Thyroid gland (tissue), 4 donors: ENCODE measurements at regions of chr9 and their contacts with region 1.

Region 1: DNA sequence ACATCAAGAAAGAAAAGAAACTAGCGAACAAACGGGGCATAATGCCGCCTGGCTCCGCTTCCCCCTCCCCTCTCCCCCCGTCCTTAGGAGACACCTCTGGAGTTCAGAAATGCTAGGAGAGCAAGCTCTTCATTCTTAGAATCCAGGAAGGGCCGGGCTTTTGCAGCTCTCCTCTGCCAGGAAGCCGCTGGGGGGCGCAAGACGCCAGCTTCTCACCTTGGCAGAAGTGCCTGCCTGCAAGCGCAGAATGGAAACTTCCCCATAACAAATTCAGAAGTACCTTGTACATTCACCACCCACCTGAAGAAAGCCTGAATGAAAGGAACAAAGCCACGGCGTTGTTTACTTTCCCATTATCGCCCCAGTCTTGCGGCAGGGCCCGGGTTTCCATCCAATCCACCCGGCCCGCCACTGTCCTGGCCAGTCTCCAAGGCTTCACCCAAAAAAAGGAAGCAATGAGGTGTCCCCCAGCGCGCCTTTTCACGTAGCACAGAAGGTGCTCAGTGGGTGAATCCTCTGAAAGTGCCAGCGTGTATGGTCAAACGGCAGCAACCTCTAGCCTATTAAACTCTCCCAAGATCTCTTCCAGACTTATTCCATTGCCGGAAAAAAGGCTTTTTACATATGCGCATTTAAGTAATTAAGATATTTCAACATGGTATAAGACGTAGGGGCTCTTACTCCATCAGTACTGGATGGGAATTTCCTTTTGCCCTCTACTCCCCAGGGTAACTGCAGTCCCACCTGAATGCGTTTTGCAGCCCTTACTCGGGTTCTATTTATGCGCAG is 1.6 kb upstream of the GADD45G start:
- DNase-seq: peak; percentile 93 to 96
- H3K4me3 ChIP-seq: peak overlapping the region in 1 of 3 donors; percentile 65
- H3K27ac ChIP-seq: peak overlapping the region in 2 of 3 donors; percentile 53 to 97
- H3K4me1 ChIP-seq: peaks cover 23 to 30% of the 10 kb centered on the region in 2 donors
- H3K27me3 ChIP-seq: no peaks in the 10 kb centered on the region
- CTCF ChIP-seq: peak; percentile 44 to 95 (median 85)
- POLR2A ChIP-seq: no peak

Region 2: DNA sequence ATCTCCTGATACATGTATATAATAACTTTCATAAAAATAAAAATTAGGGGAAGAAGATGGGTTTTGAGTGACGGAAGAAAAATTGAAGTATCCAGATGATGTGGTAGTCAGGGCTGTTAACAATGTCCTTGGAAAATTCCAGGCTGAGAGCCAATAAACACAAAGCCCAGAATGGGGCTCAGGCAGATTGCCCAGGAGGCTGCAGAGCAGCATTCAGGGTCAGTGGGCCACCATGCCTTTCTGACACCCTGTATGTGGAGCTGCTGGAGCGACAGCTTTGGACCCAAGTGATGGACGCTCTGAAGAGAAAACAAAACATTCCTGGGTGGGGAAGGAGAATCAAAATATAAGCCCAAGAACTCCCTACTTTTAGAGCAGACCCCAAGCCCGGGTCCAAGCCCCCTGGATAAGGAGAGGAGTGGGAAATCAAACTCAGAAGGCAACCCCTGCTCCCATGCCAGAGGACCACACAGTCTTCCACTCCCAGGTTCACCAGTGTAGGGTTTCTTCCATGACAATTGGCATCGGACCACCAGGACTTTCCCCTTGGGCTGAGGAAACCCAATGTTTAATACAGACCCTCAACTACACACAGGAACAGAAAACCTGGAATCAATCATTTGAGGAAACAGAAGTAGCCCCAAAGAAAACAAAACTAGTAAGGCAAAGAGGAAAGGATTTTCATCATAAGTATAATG is 1419.2 kb before region 1 on chr9:
- intact Hi-C with region 1: no loop called
- DNase-seq: peak; percentile 63 to 68
- H3K4me3 ChIP-seq: no peak overlapping the region
- H3K27ac ChIP-seq: no peak overlapping the region
- H3K4me1 ChIP-seq: peaks cover 0 to 11% of the 10 kb centered on the region in 2 donors
- H3K27me3 ChIP-seq: no peaks in the 10 kb centered on the region
- CTCF ChIP-seq: no peak
- POLR2A ChIP-seq: no peak

Region 3: GRCh38 chr9:89549031-89549644 is 54.0 kb before region 1 on chr9:
- intact Hi-C with region 1: no loop called
- DNase-seq: peak; percentile 75 to 78
- H3K4me3 ChIP-seq: no peak overlapping the region
- H3K27ac ChIP-seq: no peak overlapping the region
- H3K4me1 ChIP-seq: peaks cover 0 to under 1% of the 10 kb centered on the region in 2 donors
- H3K27me3 ChIP-seq: no peaks in the 10 kb centered on the region
- CTCF ChIP-seq: peak; percentile 56 to 95 (median 88)
- POLR2A ChIP-seq: no peak

Region 4: DNA sequence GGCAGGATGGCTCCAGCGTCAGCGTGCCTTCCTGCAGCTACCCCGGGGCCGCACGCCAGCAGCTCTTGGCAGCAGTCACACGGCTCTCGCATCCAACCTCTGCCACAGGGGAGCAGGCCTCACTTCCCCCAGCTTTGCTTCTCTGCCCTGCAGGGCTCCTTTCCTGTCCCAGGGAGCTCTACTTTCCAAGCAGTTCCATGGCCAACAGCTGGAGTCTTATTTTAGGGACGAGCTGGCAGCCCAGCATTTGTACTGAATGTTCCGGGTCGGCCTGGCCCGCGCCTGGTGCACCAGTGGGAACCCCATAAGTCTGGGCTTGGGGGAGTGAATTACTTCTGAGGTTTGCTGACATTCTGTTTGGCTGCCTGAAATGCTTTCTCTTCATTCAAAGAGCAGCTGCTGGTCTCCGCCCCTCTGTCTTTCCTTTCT is 36.2 kb after region 1 on chr9:
- intact Hi-C with region 1: loop called (anchors 2 kb)
- DNase-seq: no peak
- H3K4me3 ChIP-seq: no peak overlapping the region
- H3K27ac ChIP-seq: no peak overlapping the region
- H3K4me1 ChIP-seq: peaks cover 17 to 23% of the 10 kb centered on the region in 2 donors
- H3K27me3 ChIP-seq: no peaks in the 10 kb centered on the region
- CTCF ChIP-seq: no peak
- POLR2A ChIP-seq: no peak

Region 5: GRCh38 chr9:89923961-89924504 is 320.9 kb after region 1 on chr9:
- intact Hi-C with region 1: loop called (anchors 5 kb)
- DNase-seq: no peak
- H3K4me3 ChIP-seq: no peak overlapping the region
- H3K27ac ChIP-seq: no peak overlapping the region
- H3K4me1 ChIP-seq: peaks cover 0 to 3% of the 10 kb centered on the region in 2 donors
- H3K27me3 ChIP-seq: peaks cover 5% of the 10 kb centered on the region
- CTCF ChIP-seq: no peak
- POLR2A ChIP-seq: no peak

Region 6: GRCh38 chr9:90102292-90102901 is 499.2 kb after region 1 on chr9:
- intact Hi-C with region 1: loop called (anchors 2 kb)
- DNase-seq: peak; percentile 91 to 93
- H3K4me3 ChIP-seq: no peak overlapping the region
- H3K27ac ChIP-seq: no peak overlapping the region
- H3K4me1 ChIP-seq: peaks cover 10 to 11% of the 10 kb centered on the region in 2 donors
- H3K27me3 ChIP-seq: no peaks in the 10 kb centered on the region
- CTCF ChIP-seq: peak in 5 of 6 experiments; percentile 73 to 98 (median 93)
- POLR2A ChIP-seq: no peak